ENCODE measurements at regions of chr1 and their contacts with region 1.

Region 1: DNA sequence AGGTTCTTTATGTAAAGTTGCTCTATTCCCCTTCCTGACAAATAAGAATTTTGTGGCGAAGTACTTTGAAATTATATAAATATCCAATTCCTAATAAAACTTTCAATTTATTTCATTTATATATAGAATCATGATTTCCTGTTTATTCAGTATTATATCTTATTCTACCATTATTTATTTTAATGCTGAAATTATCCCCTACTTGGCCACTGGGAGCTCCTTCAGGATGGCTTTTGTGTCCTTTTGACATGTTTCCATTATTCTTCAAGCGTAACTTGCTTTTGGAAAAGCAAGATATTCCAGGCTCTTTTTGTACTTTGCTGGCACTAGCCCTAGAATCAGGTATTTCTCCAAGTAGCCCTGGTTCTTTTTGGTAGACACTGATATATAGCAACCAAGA is 67.2 kb upstream of the CACYBP start:
- DNase-seq: no peak
- ATAC-seq: no peak
- H3K4me3 ChIP-seq: no peak overlapping the region
- H3K4me3 Mint-ChIP-seq: no peak overlapping the region
- H3K27ac ChIP-seq: no peak overlapping the region
- H3K27ac Mint-ChIP-seq: no peak overlapping the region
- H3K4me1 ChIP-seq: no peaks in the 10 kb centered on the region
- H3K4me1 Mint-ChIP-seq: peaks cover 3 to 6% (median 5%) of the 10 kb centered on the region in 3 donors
- H3K27me3 ChIP-seq: no peaks in the 10 kb centered on the region
- H3K27me3 Mint-ChIP-seq: no peaks in the 10 kb centered on the region

Region 2: GRCh38 chr1:174671826-174672225 is 260.8 kb before region 1 on chr1:
- CTCF ChIA-PET with region 1: no interaction called
- POLR2A ChIA-PET with region 1: no interaction called
- DNase-seq: no peak
- ATAC-seq: no peak
- H3K4me3 ChIP-seq: no peak overlapping the region
- H3K4me3 Mint-ChIP-seq: no peak overlapping the region
- H3K27ac ChIP-seq: no peak overlapping the region
- H3K27ac Mint-ChIP-seq: no peak overlapping the region
- H3K4me1 ChIP-seq: no peaks in the 10 kb centered on the region
- H3K4me1 Mint-ChIP-seq: peaks cover 0 to 3% (median 0%) of the 10 kb centered on the region in 3 donors
- H3K27me3 ChIP-seq: no peaks in the 10 kb centered on the region
- H3K27me3 Mint-ChIP-seq: no peaks in the 10 kb centered on the region

Region 3: GRCh38 chr1:174809755-174810280 is 122.8 kb before region 1 on chr1:
- CTCF ChIA-PET with region 1: no interaction called
- POLR2A ChIA-PET with region 1: no interaction called
- DNase-seq: no peak
- ATAC-seq: no peak
- H3K4me3 ChIP-seq: no peak overlapping the region
- H3K4me3 Mint-ChIP-seq: no peak overlapping the region
- H3K27ac ChIP-seq: no peak overlapping the region
- H3K27ac Mint-ChIP-seq: no peak overlapping the region
- H3K4me1 ChIP-seq: no peaks in the 10 kb centered on the region
- H3K4me1 Mint-ChIP-seq: peaks cover 0 to 11% (median under 1%) of the 10 kb centered on the region in 3 donors
- H3K27me3 ChIP-seq: no peaks in the 10 kb centered on the region
- H3K27me3 Mint-ChIP-seq: no peaks in the 10 kb centered on the region

Region 4: DNA sequence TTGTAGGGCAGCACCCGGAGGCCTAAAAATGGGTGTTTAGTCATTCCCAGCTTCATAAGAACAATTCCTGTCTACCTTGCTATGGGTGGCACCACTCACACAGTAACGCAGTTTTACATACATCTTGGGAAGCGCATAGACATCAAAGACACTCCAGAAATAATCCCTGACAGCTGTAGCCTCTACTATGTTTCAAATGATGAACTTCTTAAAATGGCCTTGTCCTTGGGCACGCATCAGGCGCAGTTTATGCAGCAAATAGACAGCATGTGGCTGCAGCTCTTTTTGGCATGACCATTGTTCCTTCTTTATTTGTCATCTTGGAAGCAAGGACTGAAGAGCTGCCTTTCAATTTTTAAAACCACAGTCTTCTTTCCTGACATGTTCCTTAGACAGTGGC is 10.5 kb before region 1 on chr1:
- CTCF ChIA-PET with region 1: no interaction called
- POLR2A ChIA-PET with region 1: interaction called in 1 of 2 experiments, 14 read pairs
- DNase-seq: no peak
- ATAC-seq: no peak
- H3K4me3 ChIP-seq: no peak overlapping the region
- H3K4me3 Mint-ChIP-seq: no peak overlapping the region
- H3K27ac ChIP-seq: no peak overlapping the region
- H3K27ac Mint-ChIP-seq: no peak overlapping the region
- H3K4me1 ChIP-seq: no peaks in the 10 kb centered on the region
- H3K4me1 Mint-ChIP-seq: peaks cover 0 to 2% (median under 1%) of the 10 kb centered on the region in 3 donors
- H3K27me3 ChIP-seq: no peaks in the 10 kb centered on the region
- H3K27me3 Mint-ChIP-seq: no peaks in the 10 kb centered on the region

Region 5: GRCh38 chr1:174976436-174977108 is 44.0 kb after region 1 on chr1:
- CTCF ChIA-PET with region 1: no interaction called
- POLR2A ChIA-PET with region 1: no interaction called
- DNase-seq: no peak
- ATAC-seq: peak in 2 of 4 experiments; percentile 38 to 56
- H3K4me3 ChIP-seq: no peak overlapping the region
- H3K4me3 Mint-ChIP-seq: no peak overlapping the region
- H3K27ac ChIP-seq: no peak overlapping the region
- H3K27ac Mint-ChIP-seq: peak overlapping the region; percentile 70 to 77
- H3K4me1 ChIP-seq: peaks cover 5 to 10% of the 10 kb centered on the region in 2 experiments
- H3K4me1 Mint-ChIP-seq: peaks cover 42 to 65% (median 61%) of the 10 kb centered on the region in 3 donors
- H3K27me3 ChIP-seq: no peaks in the 10 kb centered on the region
- H3K27me3 Mint-ChIP-seq: no peaks in the 10 kb centered on the region